Activated CD4-positive, alpha-beta T cell treated with anti-CD3 and anti-CD28 coated beads, Interleukin-2, amount 10 ng/mL, durations not matched to agents 24 days and 14 days (primary cell): ENCODE measurements at regions of chr12 and their contacts with region 1.

Region 1: DNA sequence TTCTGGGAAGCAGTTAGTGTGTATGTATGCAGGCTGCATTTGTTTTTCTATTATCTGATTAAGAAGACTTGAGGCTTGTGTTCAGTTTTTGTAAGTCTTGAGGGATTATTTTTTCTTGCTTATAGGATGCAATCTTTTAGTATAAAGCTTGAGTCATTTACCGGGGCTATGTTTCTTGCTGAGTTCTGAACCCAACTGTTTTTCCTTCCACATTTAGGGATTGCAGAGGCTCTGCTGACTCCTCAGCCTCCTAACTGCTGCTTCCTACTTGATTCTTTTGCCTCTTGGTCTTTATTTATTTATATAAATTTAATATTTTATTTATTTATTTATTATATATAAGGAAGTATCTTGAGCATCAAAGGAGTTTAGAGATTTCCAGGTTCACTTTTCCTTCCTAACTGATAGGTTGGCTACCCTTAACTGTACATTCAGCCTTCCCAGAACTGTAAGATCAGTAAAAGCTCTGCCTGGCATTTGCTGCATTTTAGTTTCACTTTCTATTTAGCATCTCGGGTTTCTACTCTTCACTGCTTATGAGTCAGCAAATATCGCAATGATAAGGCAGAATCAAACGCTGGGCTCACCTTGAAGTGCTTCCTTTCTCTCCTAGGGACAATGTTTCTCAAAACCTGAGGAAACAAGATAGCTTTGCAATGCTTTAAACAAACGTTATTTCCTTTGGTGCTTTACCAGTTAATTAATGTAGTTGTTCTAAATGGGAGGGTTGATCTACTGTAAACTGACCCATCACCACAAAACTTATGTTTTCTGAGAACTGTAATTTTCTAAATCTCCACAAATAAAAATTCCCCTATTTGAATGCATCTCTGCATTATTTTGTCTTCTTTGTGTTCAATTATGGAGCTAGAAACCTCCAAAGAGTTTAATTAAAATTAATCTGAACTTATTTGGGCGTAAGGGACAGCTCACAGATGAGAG is 1183.7 kb upstream of the TMEM132C start:
- DNase-seq: peak; percentile 78
- H3K4me3 Mint-ChIP-seq: peak overlapping the region; percentile 75
- H3K27ac Mint-ChIP-seq: no peak overlapping the region
- H3K4me1 Mint-ChIP-seq: peaks cover 7% of the 10 kb centered on the region
- H3K27me3 Mint-ChIP-seq: peaks cover 7% of the 10 kb centered on the region

Region 2: GRCh38 chr12:127108360-127109215 is 25.3 kb after region 1 on chr12:
- intact Hi-C with region 1: no loop called
- DNase-seq: peak; percentile 82
- H3K4me3 Mint-ChIP-seq: no peak overlapping the region
- H3K27ac Mint-ChIP-seq: no peak overlapping the region
- H3K4me1 Mint-ChIP-seq: no peaks in the 10 kb centered on the region
- H3K27me3 Mint-ChIP-seq: peaks cover 6% of the 10 kb centered on the region

Region 3: DNA sequence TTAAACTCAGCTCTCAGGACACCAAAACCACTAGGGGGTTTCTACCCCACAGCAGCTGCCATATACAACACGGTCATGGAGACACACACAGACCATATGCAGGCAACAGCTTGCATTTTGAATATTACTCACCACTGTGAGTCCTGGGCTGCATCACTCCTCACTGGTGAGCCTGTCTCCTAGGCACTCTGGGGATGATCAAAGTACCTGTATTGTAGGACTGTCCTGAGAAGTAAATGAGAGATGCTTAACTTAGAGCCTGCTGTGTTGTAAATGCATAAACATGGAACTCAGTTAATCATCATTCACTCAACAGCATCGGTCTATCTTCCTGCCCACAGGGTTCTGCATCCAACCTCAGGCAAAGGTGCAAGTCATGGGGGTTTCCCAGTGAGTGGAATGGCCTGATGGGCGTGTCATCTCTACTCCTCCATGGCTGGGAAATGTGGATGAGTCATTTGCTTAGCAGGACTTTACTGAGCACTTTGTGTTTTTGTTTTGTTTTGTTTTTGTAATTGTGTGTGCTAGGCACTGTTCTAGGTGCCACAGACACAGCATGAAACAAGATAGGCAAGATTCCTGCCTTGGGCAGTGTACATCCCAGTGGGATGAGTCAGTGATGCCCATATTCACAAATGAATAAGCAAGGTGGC is 42.5 kb after region 1 on chr12:
- intact Hi-C with region 1: loop called (anchors 5 kb)
- DNase-seq: peak; percentile 79
- H3K4me3 Mint-ChIP-seq: no peak overlapping the region
- H3K27ac Mint-ChIP-seq: peak overlapping the region; percentile 81
- H3K4me1 Mint-ChIP-seq: peaks cover 12% of the 10 kb centered on the region
- H3K27me3 Mint-ChIP-seq: no peaks in the 10 kb centered on the region

Region 4: GRCh38 chr12:127165567-127166392 is 82.5 kb after region 1 on chr12:
- intact Hi-C with region 1: loop called (anchors 2 kb)
- DNase-seq: peak; percentile 95
- H3K4me3 Mint-ChIP-seq: peak overlapping the region; percentile 78
- H3K27ac Mint-ChIP-seq: no peak overlapping the region
- H3K4me1 Mint-ChIP-seq: peaks cover 18% of the 10 kb centered on the region
- H3K27me3 Mint-ChIP-seq: peaks cover 9% of the 10 kb centered on the region

Region 5: DNA sequence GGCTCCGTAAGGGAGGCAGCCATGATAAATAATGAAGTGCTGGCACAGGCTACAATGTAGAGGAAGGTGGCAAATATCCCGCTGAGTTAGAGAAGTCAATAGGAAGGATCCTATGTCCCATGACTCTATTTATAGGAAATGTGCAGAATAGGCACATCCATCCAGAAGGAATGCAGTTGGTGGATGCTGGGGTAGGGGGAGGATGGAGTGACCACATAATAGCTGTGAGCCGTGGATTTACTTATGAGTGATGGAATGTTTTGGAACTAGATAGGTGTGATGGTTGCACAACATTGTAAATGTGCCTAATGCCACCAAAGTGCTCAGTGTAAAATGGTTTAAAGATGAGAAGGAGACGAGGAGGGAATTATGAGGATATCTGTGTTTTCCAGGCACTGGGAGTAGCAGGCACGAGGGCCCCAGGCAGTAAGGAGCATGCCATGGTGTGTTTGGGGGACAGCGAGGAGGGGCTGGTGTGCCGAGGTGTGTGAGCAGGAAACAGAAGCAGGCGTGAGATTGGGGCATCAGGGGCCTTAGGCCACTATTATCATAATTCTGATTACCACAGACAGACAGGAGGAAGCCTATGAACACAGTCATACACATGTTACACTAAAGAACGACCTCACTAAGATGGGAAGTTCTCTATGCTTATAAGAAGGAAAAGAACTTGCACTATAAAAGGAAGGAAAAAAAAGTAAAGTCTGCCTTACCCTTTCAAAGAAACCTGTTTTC is 346.4 kb after region 1 on chr12:
- intact Hi-C with region 1: no loop called
- DNase-seq: no peak
- H3K4me3 Mint-ChIP-seq: no peak overlapping the region
- H3K27ac Mint-ChIP-seq: no peak overlapping the region
- H3K4me1 Mint-ChIP-seq: no peaks in the 10 kb centered on the region
- H3K27me3 Mint-ChIP-seq: no peaks in the 10 kb centered on the region